HCT116 (cell line): ENCODE measurements at regions of chr10 and their contacts with region 1.

Region 1: DNA sequence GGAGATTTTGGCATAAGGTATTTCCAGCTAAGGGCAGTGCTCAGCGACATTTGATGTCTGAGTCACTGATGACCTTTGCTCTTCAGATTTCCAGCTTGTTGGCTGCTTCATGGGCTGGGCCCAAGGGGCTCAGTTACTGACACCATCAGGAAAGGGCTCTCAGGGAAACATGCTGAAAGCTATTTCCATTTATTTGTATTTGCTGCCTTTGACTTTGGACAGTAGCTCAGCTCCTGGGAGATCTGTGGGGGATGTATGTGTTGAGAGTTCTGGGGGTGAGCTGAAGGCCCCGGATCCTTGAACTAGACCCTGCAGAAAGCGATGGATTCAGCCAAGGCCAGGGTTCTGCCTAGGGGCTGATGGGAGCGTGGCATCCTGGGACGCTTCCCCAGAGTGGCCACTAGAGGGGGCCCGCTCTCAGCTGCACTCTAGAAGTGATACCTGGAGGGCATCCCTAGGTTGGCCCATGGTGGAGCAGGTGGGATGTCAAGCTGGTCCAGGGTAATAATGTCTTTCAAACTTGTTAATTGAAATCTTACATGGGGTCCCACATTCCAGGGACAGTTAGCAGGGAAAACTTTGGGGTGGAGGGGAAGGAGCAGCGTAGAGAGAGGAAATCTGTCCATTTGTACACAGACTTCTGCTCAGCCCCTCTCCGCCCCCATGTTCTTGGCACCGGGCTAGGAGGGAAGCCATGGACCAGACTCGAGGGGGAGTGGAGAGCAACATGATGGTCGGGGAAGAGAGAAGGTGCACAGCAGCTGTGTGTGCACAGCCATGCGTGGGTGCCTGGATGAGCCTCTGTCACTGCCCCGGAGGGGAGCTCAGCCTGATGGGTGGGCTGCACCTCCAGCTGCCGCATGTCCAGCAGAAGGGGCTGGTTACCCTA is 3.0 kb upstream of the BTBD16 start:
- DNase-seq: peak; percentile 36
- ATAC-seq: peak; percentile 99
- H3K4me3 ChIP-seq: no peak overlapping the region
- H3K27ac ChIP-seq: no peak overlapping the region
- H3K4me1 ChIP-seq: peaks cover 0 to 16% of the 10 kb centered on the region in 2 experiments; a peak in 2 of 4 replicates
- H3K27me3 ChIP-seq: no peaks in the 10 kb centered on the region
- CTCF ChIP-seq: peak; percentile 85 to 100 (median 100)
- POLR2A ChIP-seq: no peak
- RAD21 ChIP-seq: peak; percentile 80

Region 2: DNA sequence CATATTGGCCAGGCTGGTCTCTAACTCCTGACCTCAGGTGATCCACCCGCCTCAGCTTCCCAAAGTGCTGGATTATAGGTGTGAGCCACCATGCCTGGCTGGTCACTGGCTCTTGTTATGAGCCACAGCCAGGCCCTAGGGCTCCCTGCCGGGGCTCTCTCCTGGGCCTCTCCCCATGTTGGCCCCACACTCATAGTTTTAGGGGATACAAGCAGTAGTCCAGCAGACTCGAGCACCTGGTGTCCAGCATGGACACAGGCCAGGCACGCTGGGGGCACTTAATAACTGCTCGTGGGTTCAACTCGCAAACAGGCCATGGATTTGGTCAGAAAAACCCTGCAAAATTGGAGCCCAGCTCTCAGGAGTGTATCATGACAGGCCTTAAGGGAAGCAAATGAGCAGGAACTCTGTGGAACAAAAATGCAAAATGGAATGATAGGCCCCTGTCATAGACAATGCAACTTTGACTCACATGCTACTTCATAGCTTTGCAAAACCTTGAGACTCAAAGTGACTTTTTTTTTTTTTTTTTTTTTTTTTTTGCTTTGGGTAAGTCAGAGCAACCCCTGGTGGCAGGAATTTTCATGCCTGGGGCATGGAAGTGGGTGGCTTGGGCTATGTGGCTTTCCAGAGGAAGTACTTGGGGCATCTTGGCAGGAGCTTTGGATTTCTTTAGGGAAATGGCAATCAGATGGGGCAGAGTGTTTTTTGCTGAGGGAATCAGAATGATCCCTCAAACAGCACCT is 216.7 kb before region 1 on chr10:
- CTCF ChIA-PET with region 1: interaction called, 4 read pairs
- POLR2A ChIA-PET with region 1: no interaction called
- RAD21 ChIA-PET with region 1: no interaction called
- intact Hi-C with region 1: loop called (anchors 5 kb)
- DNase-seq: peak; percentile 79
- ATAC-seq: peak; percentile 73
- H3K4me3 ChIP-seq: no peak overlapping the region
- H3K27ac ChIP-seq: no peak overlapping the region; the same call in 1 of the 2 replicates
- H3K4me1 ChIP-seq: peaks cover 9 to 13% of the 10 kb centered on the region in 2 experiments
- H3K27me3 ChIP-seq: no peaks in the 10 kb centered on the region
- CTCF ChIP-seq: peak; percentile 74 to 98 (median 96)
- POLR2A ChIP-seq: no peak
- RAD21 ChIP-seq: peak; percentile 76

Region 3: DNA sequence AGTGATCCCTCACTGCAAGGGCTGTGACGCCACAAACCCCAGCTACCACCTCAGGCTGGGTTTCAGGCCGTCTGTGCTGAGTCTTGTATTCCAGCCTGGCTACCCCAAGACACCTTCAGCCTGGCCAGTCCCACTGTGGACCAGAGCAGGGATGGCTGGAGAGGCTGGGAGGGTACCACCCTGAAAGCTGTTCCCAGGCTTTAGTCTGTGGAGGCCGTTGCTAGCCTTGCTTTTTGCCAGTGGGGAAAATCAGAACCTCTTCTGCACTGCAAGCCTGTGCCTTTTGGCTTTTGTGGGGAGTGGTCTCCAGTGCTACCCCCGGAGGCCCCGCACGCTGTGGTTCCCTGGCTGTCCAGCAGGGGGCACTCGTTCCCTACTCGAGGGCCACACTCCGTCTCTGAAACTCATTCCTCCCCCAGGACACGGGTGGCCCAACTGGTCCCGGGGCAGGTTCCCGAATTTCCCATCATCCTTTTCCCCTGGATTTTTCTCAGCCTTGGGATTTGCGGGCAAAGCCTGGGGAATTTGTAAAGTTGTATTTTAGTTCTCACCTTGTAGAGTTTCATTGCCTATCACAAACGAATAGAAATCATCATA is 125.4 kb before region 1 on chr10:
- CTCF ChIA-PET with region 1: interaction called, 4 read pairs
- POLR2A ChIA-PET with region 1: no interaction called
- RAD21 ChIA-PET with region 1: no interaction called
- intact Hi-C with region 1: loop called (anchors 1 kb)
- DNase-seq: no peak
- ATAC-seq: peak; percentile 52
- H3K4me3 ChIP-seq: no peak overlapping the region
- H3K27ac ChIP-seq: no peak overlapping the region; the same call in 1 of the 2 replicates
- H3K4me1 ChIP-seq: peaks cover 31 to 45% of the 10 kb centered on the region in 2 experiments
- H3K27me3 ChIP-seq: no peaks in the 10 kb centered on the region
- CTCF ChIP-seq: peak; percentile 70 to 100 (median 99)
- POLR2A ChIP-seq: no peak
- RAD21 ChIP-seq: peak; percentile 92

Region 4: DNA sequence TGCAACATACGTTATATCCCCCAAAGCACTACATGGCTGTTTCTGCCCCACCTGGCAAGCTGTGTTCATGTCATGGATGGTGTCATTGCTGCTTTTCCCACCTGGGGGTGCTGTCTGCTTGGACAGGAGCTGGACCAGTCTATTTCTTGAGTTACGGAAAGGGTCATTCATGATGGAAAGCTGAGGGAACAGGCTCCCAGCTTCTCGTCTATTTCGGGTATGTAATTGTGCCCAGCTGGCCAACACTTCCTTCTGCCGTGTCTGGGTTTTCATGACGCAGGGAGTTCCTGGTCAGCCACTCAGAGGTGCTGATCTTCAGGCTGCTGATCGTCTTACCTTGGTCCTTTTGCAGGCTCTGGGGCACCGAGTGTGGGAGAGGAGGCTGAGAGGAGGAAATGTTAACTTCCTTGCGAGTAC is 11.6 kb after region 1 on chr10:
- CTCF ChIA-PET with region 1: interaction called, 16 read pairs
- POLR2A ChIA-PET with region 1: no interaction called
- RAD21 ChIA-PET with region 1: interaction called in 1 of 2 experiments, 3 read pairs
- intact Hi-C with region 1: no loop called
- DNase-seq: peak; percentile 70
- ATAC-seq: peak; percentile 87
- H3K4me3 ChIP-seq: no peak overlapping the region
- H3K27ac ChIP-seq: no peak overlapping the region
- H3K4me1 ChIP-seq: peaks cover 3 to 15% of the 10 kb centered on the region in 2 experiments; a peak in 3 of 4 replicates
- H3K27me3 ChIP-seq: no peaks in the 10 kb centered on the region
- CTCF ChIP-seq: peak; percentile 88 to 98 (median 97); a peak in 5 of 6 replicates
- POLR2A ChIP-seq: no peak
- RAD21 ChIP-seq: peak; percentile 98